ENCODE measurements at regions of chr6 and their contacts with region 1.

Region 1: GRCh38 chr6:142474531-142475289 is 172.9 kb downstream of the ADGRG6 start:
- H3K4me3 ChIP-seq: no peak overlapping the region
- H3K27ac ChIP-seq: no peak overlapping the region
- H3K4me1 ChIP-seq: no peaks in the 10 kb centered on the region
- CTCF ChIP-seq: peak; percentile 60; the same call in 1 of the 2 replicates

Region 2: GRCh38 chr6:142301651-142302370 is 172.9 kb before region 1 on chr6 and contains the start of gene ADGRG6:
- CTCF ChIA-PET with region 1: interaction called, 14 read pairs
- POLR2A ChIA-PET with region 1: interaction called, 4 read pairs
- H3K4me3 ChIP-seq: peak within 1 kb of the TSS; percentile 54
- H3K27ac ChIP-seq: peak within 1 kb of the TSS; percentile 79; the same call in 1 of the 2 replicates
- H3K4me1 ChIP-seq: peaks cover 11% of the 10 kb centered on the region
- CTCF ChIP-seq: peak; percentile 94

Region 3: DNA sequence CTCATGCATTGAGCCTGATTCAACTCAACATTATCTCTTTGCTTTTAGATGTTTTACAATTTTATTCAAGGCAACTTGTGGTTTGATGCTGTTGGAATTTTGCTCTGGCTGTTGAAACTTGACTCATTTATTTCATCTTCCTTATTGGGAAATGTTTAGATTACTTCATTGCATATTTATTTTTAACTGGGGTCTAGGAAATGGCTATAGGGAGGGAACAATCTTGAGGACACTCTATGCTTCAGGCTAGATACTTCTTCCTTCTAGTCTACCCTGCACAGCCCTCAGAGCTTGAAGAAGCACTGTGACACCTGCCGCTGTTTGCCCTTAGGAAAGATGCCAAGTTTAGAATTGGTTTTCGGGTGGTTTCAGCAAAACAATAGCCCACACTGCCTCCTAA is 10.5 kb after region 1 on chr6:
- CTCF ChIA-PET with region 1: interaction called, 32 read pairs
- POLR2A ChIA-PET with region 1: no interaction called
- H3K4me3 ChIP-seq: no peak overlapping the region
- H3K27ac ChIP-seq: no peak overlapping the region
- H3K4me1 ChIP-seq: no peaks in the 10 kb centered on the region
- CTCF ChIP-seq: no peak

Region 4: GRCh38 chr6:142537612-142538478 is 63.1 kb after region 1 on chr6:
- CTCF ChIA-PET with region 1: interaction called, 81 read pairs
- POLR2A ChIA-PET with region 1: no interaction called
- H3K4me3 ChIP-seq: no peak overlapping the region
- H3K27ac ChIP-seq: no peak overlapping the region
- H3K4me1 ChIP-seq: no peaks in the 10 kb centered on the region
- CTCF ChIP-seq: peak; percentile 25

Region 5: GRCh38 chr6:142692942-142693341 is 218.2 kb after region 1 on chr6:
- CTCF ChIA-PET with region 1: interaction called, 19 read pairs
- POLR2A ChIA-PET with region 1: no interaction called
- H3K4me3 ChIP-seq: no peak overlapping the region
- H3K27ac ChIP-seq: no peak overlapping the region
- H3K4me1 ChIP-seq: no peaks in the 10 kb centered on the region
- CTCF ChIP-seq: peak; percentile 81